CD8-positive, alpha-beta T cell (primary cell): ENCODE measurements at regions of chr20 and their contacts with region 1.

Region 1: DNA sequence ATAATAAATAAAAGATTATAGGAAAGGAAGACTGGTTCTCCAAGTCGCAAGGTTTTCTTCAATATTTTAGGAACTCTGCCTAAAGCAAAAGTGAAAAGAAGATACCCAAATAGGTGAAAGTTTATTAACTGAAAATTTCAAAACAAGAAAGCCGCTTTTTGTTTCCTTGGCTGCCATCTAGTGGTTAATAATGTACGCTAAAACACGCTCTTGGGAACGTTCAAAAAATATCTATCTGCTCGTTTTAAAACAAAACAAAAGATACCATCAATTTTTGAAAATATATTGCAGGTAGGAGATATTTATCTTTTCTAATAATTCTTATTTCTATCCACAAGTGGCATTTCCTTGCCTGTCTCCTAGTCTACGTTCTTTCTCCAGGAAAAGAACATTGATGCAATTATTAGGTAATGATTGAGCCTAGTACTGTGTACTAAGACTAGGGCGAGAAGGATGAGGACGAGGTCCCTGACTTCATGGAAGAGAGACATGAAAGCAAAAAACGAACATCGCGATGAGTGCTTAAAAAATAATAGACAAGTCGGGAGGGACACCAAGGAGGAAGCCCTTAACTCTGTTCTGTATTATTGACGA is 97.2 kb downstream of the SPTLC3 start:
- DNase-seq: peak in 2 of 9 experiments; percentile 10 to 29
- ATAC-seq: no peak
- H3K4me3 ChIP-seq: no peak overlapping the region
- H3K4me3 Mint-ChIP-seq: no peak overlapping the region
- H3K27ac ChIP-seq: no peak overlapping the region
- H3K27ac Mint-ChIP-seq: no peak overlapping the region
- H3K4me1 ChIP-seq: no peaks in the 10 kb centered on the region
- H3K4me1 Mint-ChIP-seq: no peaks in the 10 kb centered on the region
- H3K27me3 ChIP-seq: no peaks in the 10 kb centered on the region
- H3K27me3 Mint-ChIP-seq: peaks cover 4% of the 10 kb centered on the region
- CTCF ChIP-seq: peak; percentile 65

Region 2: DNA sequence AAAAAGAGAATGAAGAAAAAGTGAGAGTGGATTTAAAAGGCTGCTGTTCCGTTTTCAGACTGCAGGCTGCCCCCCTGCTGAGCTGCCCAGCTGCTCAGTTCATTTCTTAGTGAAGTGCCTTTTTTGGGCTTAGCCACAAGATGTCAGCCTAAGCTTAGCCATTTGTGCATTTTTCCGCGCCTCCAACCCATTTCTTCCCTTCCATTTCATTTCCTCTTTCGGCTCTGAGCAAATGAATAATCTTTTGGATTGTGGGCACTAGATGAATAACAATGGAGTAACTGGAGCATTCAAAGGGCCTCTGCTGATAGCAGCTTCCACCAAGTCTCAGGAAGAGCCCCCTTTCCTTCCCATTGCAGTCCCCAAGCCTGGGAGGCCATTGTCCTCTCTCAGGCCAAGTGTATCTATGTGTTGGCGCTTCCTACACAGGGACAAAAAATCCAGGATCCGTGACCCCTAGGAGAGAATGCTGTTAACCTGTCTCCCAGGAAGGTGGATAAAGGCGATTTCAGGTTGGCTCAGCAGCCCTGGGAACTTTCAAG is 180.7 kb before region 1 on chr20:
- CTCF ChIA-PET with region 1: interaction called, 3 read pairs
- POLR2A ChIA-PET with region 1: no interaction called
- intact Hi-C with region 1: loop called in 1 of 2 experiments (anchors 5 kb)
- DNase-seq: peak in 4 of 9 experiments; percentile 9 to 57 (median 30)
- ATAC-seq: peak; percentile 34
- H3K4me3 ChIP-seq: no peak overlapping the region
- H3K4me3 Mint-ChIP-seq: no peak overlapping the region
- H3K27ac ChIP-seq: no peak overlapping the region
- H3K27ac Mint-ChIP-seq: no peak overlapping the region
- H3K4me1 ChIP-seq: no peaks in the 10 kb centered on the region
- H3K4me1 Mint-ChIP-seq: peaks cover 3% of the 10 kb centered on the region
- H3K27me3 ChIP-seq: no peaks in the 10 kb centered on the region
- H3K27me3 Mint-ChIP-seq: peaks cover 4% of the 10 kb centered on the region
- CTCF ChIP-seq: peak; percentile 44